T-cell (primary cell): ENCODE measurements at regions of chr4 and their contacts with region 1.

Region 1: GRCh38 chr4:122959981-122960610 is 37.7 kb upstream of the NUDT6 start:
- DNase-seq: no peak
- ATAC-seq: no peak
- H3K4me3 ChIP-seq: no peak overlapping the region
- H3K4me3 Mint-ChIP-seq: no peak overlapping the region
- H3K27ac ChIP-seq: no peak overlapping the region
- H3K27ac Mint-ChIP-seq: no peak overlapping the region
- H3K4me1 ChIP-seq: no peaks in the 10 kb centered on the region
- H3K4me1 Mint-ChIP-seq: peaks cover 2 to 6% (median 3%) of the 10 kb centered on the region in 3 donors
- H3K27me3 ChIP-seq: no peaks in the 10 kb centered on the region
- H3K27me3 Mint-ChIP-seq: no peaks in the 10 kb centered on the region

Region 2: DNA sequence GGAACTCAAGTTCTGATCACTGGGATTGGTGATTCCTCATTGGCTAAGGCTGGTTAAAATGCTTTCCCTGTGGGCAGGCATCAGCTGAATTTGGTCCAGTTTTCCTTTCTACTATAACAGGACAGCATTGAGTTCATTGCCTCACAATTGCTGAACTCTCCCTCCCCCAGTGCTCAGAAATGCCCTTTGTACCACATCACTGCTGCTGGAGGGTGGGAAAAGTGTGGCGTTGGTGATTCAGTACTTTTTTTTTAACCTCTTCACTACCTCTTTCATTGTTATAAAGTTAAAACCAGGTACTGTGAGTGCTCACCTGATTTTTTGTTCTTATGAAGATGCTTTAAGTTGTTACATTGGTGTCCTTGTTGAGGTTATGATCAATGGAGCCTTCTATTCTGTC is 434.2 kb before region 1 on chr4:
- CTCF ChIA-PET with region 1: no interaction called
- POLR2A ChIA-PET with region 1: interaction called in 1 of 2 experiments, 12 read pairs
- DNase-seq: no peak
- ATAC-seq: no peak
- H3K4me3 ChIP-seq: no peak overlapping the region
- H3K4me3 Mint-ChIP-seq: no peak overlapping the region
- H3K27ac ChIP-seq: no peak overlapping the region
- H3K27ac Mint-ChIP-seq: no peak overlapping the region
- H3K4me1 ChIP-seq: no peaks in the 10 kb centered on the region
- H3K4me1 Mint-ChIP-seq: no peaks in the 10 kb centered on the region
- H3K27me3 ChIP-seq: no peaks in the 10 kb centered on the region
- H3K27me3 Mint-ChIP-seq: peaks cover 0 to 11% of the 10 kb centered on the region in 2 donors

Region 3: GRCh38 chr4:122854447-122855352 is 105.4 kb before region 1 on chr4:
- CTCF ChIA-PET with region 1: no interaction called
- POLR2A ChIA-PET with region 1: no interaction called
- DNase-seq: no peak
- ATAC-seq: no peak
- H3K4me3 ChIP-seq: no peak overlapping the region
- H3K4me3 Mint-ChIP-seq: no peak overlapping the region
- H3K27ac ChIP-seq: no peak overlapping the region
- H3K27ac Mint-ChIP-seq: no peak overlapping the region
- H3K4me1 ChIP-seq: no peaks in the 10 kb centered on the region
- H3K4me1 Mint-ChIP-seq: peaks cover 0 to 2% (median 0%) of the 10 kb centered on the region in 3 donors
- H3K27me3 ChIP-seq: no peaks in the 10 kb centered on the region
- H3K27me3 Mint-ChIP-seq: peaks cover 5 to 14% of the 10 kb centered on the region in 2 donors